Heart right ventricle (tissue), 16 donors: ENCODE measurements at regions of chr11 and their contacts with region 1.

Region 1: GRCh38 chr11:130677486-130678153 is 229.2 kb downstream of the ADAMTS15 start:
- DNase-seq: peak in 1 of 2 donors; percentile 46
- ATAC-seq: peak in 7 of 8 donors; percentile 27 to 82 (median 67)
- H3K4me3 ChIP-seq: no peak overlapping the region
- H3K27ac ChIP-seq: peak overlapping the region in 9 of 10 donors; percentile 75 to 89 (median 83)
- H3K4me1 ChIP-seq: peaks cover 4 to 48% (median 39%) of the 10 kb centered on the region in 9 donors
- H3K27me3 ChIP-seq: no peaks in the 10 kb centered on the region
- CTCF ChIP-seq: no peak

Region 2: DNA sequence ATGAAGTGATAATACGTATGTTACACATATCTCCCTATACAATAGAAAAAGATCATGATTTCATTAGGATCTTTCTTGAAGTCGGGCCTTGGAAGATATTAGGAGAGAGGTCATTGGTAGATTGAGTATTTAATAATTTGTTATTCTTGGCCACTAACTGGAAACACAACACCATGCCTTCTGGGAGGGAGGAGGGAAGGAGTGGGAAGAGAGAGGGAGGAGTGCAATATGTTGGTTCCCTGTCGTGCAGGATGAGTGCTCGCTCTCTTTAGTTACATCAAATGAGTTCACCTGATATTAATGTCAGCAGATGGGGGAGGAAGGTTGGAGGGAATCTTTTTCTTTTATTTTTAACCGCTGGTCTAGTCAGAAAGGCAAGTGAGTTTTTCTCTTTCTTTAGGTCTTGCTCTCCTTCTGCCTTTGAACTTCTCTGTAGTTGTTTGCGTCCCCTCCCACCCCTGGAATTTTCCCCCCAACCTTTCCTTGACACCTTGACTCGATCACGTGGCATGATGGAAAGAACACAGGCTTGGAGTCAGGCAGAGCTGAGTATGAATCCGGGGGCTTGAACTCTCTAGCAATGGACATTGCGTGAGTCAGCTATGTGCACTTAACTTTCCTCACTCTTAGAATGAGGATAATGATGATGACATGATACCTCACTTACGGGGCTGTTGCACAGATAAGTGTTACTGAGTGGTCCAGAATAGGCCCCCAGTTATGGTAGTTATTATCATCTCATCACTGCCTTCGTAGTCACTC is 222.9 kb before region 1 on chr11:
- intact Hi-C with region 1: loop called in 6 of 10 experiments (anchors 2 to 10 kb)
- DNase-seq: no peak
- ATAC-seq: peak in 4 of 8 donors; percentile 18 to 38 (median 24)
- H3K4me3 ChIP-seq: no peak overlapping the region
- H3K27ac ChIP-seq: peak overlapping the region; percentile 26 to 91 (median 82)
- H3K4me1 ChIP-seq: peaks cover 26 to 98% (median 76%) of the 10 kb centered on the region in 9 donors
- H3K27me3 ChIP-seq: peaks cover 0 to 17% (median 0%) of the 10 kb centered on the region in 7 donors
- CTCF ChIP-seq: no peak

Region 3: DNA sequence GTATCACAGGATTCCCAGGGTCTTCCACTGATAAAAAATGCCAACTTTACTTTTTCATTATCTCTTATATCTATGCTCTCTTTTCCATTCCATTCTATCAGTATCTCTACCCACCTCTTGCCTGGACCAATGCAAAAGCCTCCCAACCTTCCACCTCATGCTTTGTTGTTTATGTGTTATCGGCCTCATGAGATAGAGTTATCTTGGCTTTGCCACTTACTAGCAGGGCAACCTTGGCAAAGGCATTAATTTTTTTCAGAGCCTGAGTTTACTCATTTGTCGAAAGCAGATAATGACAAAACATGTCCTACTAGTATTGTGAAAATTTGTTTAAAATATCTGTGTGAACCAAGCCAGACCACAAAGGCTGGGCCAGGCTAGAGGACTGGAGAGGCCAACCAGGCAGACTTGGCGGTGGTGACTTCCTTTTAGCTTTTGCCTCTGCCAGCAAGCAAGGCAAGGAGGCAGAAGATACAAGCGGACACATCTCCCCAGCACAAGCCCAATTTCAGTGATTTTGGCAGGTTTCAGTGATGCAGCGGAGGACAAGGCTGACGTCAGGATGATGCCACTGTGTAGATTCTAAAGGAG is 122.3 kb before region 1 on chr11:
- intact Hi-C with region 1: no loop called
- DNase-seq: no peak
- ATAC-seq: peak in 5 of 8 donors; percentile 41 to 68 (median 49)
- H3K4me3 ChIP-seq: no peak overlapping the region
- H3K27ac ChIP-seq: no peak overlapping the region
- H3K4me1 ChIP-seq: peaks cover 0 to 28% (median 9%) of the 10 kb centered on the region in 9 donors
- H3K27me3 ChIP-seq: no peaks in the 10 kb centered on the region
- CTCF ChIP-seq: no peak

Region 4: GRCh38 chr11:130599073-130599654 is 78.5 kb before region 1 on chr11:
- intact Hi-C with region 1: no loop called
- DNase-seq: peak in 1 of 2 donors; percentile 81
- ATAC-seq: peak in 3 of 8 donors; percentile 46 to 72 (median 54)
- H3K4me3 ChIP-seq: no peak overlapping the region
- H3K27ac ChIP-seq: no peak overlapping the region
- H3K4me1 ChIP-seq: peaks cover 0 to 29% (median 19%) of the 10 kb centered on the region in 9 donors
- H3K27me3 ChIP-seq: no peaks in the 10 kb centered on the region
- CTCF ChIP-seq: no peak

Region 5: DNA sequence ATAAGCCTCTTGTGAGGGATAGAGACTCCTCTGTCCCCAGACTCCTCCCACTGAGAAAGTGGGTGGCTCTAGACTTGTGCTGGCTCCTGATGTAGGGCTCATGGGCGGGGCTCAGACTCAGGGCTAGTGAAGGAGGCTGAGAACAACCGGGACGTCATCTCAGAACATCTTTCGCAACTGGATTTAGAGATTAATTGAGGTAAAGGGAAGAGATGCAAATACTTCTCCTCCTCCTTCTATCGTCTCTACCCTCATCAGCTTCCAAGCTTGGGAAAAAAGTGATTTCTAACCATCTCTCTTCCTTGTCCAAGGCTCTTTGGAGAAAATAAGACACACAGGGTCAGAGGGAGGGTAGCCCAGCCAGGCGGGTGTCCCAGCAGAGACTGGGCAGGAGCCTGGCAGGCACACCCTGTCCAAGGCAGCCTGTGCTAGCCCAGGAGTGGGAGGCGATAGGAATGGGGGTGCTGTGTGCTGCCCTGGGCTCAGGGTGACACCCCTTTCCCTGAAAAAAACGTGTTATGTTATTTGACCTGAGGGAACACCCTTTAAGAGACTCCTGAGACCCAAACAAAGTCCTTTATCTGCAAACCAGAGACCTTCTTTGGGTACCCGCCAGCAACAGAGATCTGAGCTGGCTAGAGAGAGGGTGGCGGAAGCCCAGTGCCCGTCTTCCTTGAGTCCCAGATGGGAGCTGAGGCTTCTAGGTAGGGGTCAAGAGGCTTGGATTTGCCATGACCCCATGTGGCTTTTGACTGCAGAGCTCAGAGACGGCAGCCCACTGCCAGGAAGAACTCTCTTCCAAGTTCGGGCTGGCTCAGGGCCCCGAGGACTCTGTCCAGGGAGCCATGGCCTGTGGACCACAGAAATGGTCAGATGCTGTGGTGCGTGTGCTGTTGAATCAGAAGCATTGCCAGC is 68.2 kb before region 1 on chr11:
- intact Hi-C with region 1: loop called in 1 of 10 experiments (anchors 5 kb)
- DNase-seq: peak; percentile 79 to 84
- ATAC-seq: peak; percentile 81 to 89 (median 86)
- H3K4me3 ChIP-seq: no peak overlapping the region
- H3K27ac ChIP-seq: peak overlapping the region; percentile 61 to 87 (median 80)
- H3K4me1 ChIP-seq: peaks cover 4 to 65% (median 47%) of the 10 kb centered on the region in 9 donors
- H3K27me3 ChIP-seq: no peaks in the 10 kb centered on the region
- CTCF ChIP-seq: no peak

Region 6: GRCh38 chr11:130726234-130727037 is 48.8 kb after region 1 on chr11:
- intact Hi-C with region 1: loop called in 1 of 10 experiments (anchors 5 kb)
- DNase-seq: peak; percentile 48 to 61
- ATAC-seq: peak; percentile 83 to 95 (median 90)
- H3K4me3 ChIP-seq: no peak overlapping the region
- H3K27ac ChIP-seq: peak overlapping the region in 8 of 10 donors; percentile 23 to 81 (median 63)
- H3K4me1 ChIP-seq: peaks cover 10 to 42% (median 29%) of the 10 kb centered on the region in 9 donors
- H3K27me3 ChIP-seq: no peaks in the 10 kb centered on the region
- CTCF ChIP-seq: no peak

Region 7: GRCh38 chr11:130827451-130828377 is 150.1 kb after region 1 on chr11:
- intact Hi-C with region 1: loop called in 3 of 10 experiments (anchors 2 to 10 kb)
- DNase-seq: peak; percentile 63 to 64
- ATAC-seq: peak; percentile 76 to 92 (median 88)
- H3K4me3 ChIP-seq: no peak overlapping the region
- H3K27ac ChIP-seq: peak overlapping the region in 9 of 10 donors; percentile 36 to 73 (median 64)
- H3K4me1 ChIP-seq: peaks cover 3 to 43% (median 28%) of the 10 kb centered on the region in 9 donors
- H3K27me3 ChIP-seq: no peaks in the 10 kb centered on the region
- CTCF ChIP-seq: peak in 8 of 9 donors; percentile 44 to 64 (median 53)

Region 8: GRCh38 chr11:130839981-130840666 is 162.5 kb after region 1 on chr11:
- intact Hi-C with region 1: no loop called
- DNase-seq: no peak
- ATAC-seq: peak in 3 of 8 donors; percentile 53 to 82 (median 71)
- H3K4me3 ChIP-seq: no peak overlapping the region
- H3K27ac ChIP-seq: peak overlapping the region in 1 of 10 donors; percentile 11
- H3K4me1 ChIP-seq: peaks cover 0 to 8% (median 0%) of the 10 kb centered on the region in 9 donors
- H3K27me3 ChIP-seq: no peaks in the 10 kb centered on the region
- CTCF ChIP-seq: no peak